ENCODE measurements at regions of chr20 and their contacts with region 1.

Region 1: DNA sequence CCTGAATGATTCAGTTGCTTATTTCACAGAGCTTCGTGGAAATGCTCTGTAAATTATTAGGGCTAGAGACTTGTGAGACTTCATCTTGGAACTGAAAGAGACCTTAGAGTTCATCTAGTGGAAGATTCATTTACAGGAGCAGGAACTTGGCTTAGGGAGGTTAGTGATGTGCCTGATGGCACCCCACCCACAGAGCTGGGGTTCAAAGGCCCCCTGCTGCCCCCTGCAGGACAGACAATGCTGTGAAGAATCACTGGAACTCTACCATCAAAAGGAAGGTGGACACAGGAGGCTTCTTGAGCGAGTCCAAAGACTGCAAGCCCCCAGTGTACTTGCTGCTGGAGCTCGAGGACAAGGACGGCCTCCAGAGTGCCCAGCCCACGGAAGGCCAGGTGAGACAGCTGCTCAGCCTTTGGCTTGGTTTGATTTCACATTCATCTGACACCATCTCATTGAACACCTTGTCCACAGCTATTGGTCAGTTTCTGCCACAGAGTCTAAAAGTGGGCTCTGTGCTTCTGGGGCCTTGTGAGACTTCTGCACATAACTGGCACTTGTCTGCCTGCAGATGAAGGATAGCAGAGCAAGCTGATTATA is 25.1 kb downstream of the MYBL2 start:
- DNase-seq: no peak
- H3K4me3 ChIP-seq: no peak overlapping the region
- H3K27me3 ChIP-seq: no peaks in the 10 kb centered on the region
- CTCF ChIP-seq: peak; percentile 79

Region 2: GRCh38 chr20:43681468-43681942 is 10.5 kb before region 1 on chr20:
- CTCF ChIA-PET with region 1: interaction called, 23 read pairs
- POLR2A ChIA-PET with region 1: no interaction called
- DNase-seq: no peak
- H3K4me3 ChIP-seq: no peak overlapping the region
- H3K27me3 ChIP-seq: no peaks in the 10 kb centered on the region
- CTCF ChIP-seq: peak; percentile 30; the same call in 1 of the 2 replicates

Region 3: DNA sequence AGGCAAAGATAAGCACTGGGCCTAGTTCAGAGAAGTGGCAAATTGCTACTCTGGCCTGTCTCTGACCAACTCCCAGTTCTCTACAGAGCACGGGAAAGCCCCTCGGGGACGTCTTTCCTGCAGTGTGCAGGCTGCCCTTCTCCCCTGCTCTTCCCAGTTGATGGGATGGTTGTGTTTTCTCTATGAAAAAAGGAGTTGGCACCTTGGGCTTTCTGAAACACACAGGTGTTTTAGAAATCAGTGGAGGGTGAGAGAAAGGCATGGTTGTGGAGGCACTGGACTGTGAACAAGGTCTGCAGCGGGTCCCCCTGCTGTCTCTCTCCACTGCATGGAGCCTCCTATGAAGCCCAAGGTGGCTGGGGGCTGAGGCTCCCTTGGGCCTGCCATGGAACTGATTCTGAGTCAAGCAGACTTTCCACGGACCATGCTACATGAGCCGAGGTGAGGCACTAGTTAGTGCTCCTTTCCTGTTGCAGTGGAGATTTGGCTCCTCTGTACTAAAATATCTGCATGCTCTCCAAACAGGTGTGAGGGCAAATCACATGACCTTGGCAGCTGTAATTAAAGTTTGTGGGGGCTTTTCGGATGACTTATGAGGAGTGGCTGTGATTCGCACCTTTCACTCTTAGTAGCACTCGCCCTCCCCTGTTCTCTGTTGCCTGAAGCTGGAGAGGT is 18.5 kb after region 1 on chr20:
- CTCF ChIA-PET with region 1: interaction called, 10 read pairs
- POLR2A ChIA-PET with region 1: no interaction called
- DNase-seq: no peak
- H3K4me3 ChIP-seq: no peak overlapping the region
- H3K27me3 ChIP-seq: no peaks in the 10 kb centered on the region
- CTCF ChIP-seq: no peak